Natural killer cell (primary cell): ENCODE measurements at regions of chr16 and their contacts with region 1.

Region 1: GRCh38 chr16:14024300-14024699 is 46.8 kb upstream of the MRTFB start:
- DNase-seq: no peak
- ATAC-seq: no peak
- H3K4me3 ChIP-seq: no peak overlapping the region
- H3K4me3 Mint-ChIP-seq: no peak overlapping the region
- H3K27ac ChIP-seq: no peak overlapping the region
- H3K27ac Mint-ChIP-seq: no peak overlapping the region
- H3K4me1 ChIP-seq: no peaks in the 10 kb centered on the region
- H3K4me1 Mint-ChIP-seq: no peaks in the 10 kb centered on the region
- H3K27me3 ChIP-seq: no peaks in the 10 kb centered on the region
- H3K27me3 Mint-ChIP-seq: peaks cover 3 to 20% of the 10 kb centered on the region in 2 donors
- CTCF ChIP-seq: no peak

Region 2: GRCh38 chr16:13970708-13971422 is 53.4 kb before region 1 on chr16:
- intact Hi-C with region 1: loop called (anchors 10 kb)
- DNase-seq: no peak
- ATAC-seq: no peak
- H3K4me3 ChIP-seq: no peak overlapping the region
- H3K4me3 Mint-ChIP-seq: no peak overlapping the region
- H3K27ac ChIP-seq: no peak overlapping the region
- H3K27ac Mint-ChIP-seq: no peak overlapping the region
- H3K4me1 ChIP-seq: no peaks in the 10 kb centered on the region
- H3K4me1 Mint-ChIP-seq: no peaks in the 10 kb centered on the region
- H3K27me3 ChIP-seq: peaks cover 4% of the 10 kb centered on the region
- H3K27me3 Mint-ChIP-seq: peaks cover 4 to 38% of the 10 kb centered on the region in 2 donors
- CTCF ChIP-seq: no peak